CD4-positive, alpha-beta T cell (primary cell): ENCODE measurements at regions of chr17 and their contacts with region 1.

Region 1: GRCh38 chr17:69428254-69428980 is 13.9 kb downstream of the MAP2K6 start:
- DNase-seq: peak in 2 of 14 experiments; percentile 38 to 49
- ATAC-seq: no peak
- H3K4me3 ChIP-seq: no peak overlapping the region
- H3K4me3 Mint-ChIP-seq: no peak overlapping the region
- H3K27ac ChIP-seq: no peak overlapping the region
- H3K27ac Mint-ChIP-seq: no peak overlapping the region
- H3K4me1 ChIP-seq: peaks cover 10% of the 10 kb centered on the region
- H3K4me1 Mint-ChIP-seq: peaks cover 84% of the 10 kb centered on the region
- H3K27me3 ChIP-seq: no peaks in the 10 kb centered on the region
- H3K27me3 Mint-ChIP-seq: no peaks in the 10 kb centered on the region
- CTCF ChIP-seq: no peak

Region 2: GRCh38 chr17:69269131-69269998 is 159.1 kb before region 1 on chr17:
- CTCF ChIA-PET with region 1: no interaction called
- POLR2A ChIA-PET with region 1: no interaction called
- intact Hi-C with region 1: no loop called
- DNase-seq: peak in 1 of 14 experiments; percentile 4
- ATAC-seq: no peak
- H3K4me3 ChIP-seq: no peak overlapping the region
- H3K4me3 Mint-ChIP-seq: no peak overlapping the region
- H3K27ac ChIP-seq: no peak overlapping the region
- H3K27ac Mint-ChIP-seq: no peak overlapping the region
- H3K4me1 ChIP-seq: no peaks in the 10 kb centered on the region
- H3K4me1 Mint-ChIP-seq: no peaks in the 10 kb centered on the region
- H3K27me3 ChIP-seq: no peaks in the 10 kb centered on the region
- H3K27me3 Mint-ChIP-seq: no peaks in the 10 kb centered on the region
- CTCF ChIP-seq: no peak

Region 3: DNA sequence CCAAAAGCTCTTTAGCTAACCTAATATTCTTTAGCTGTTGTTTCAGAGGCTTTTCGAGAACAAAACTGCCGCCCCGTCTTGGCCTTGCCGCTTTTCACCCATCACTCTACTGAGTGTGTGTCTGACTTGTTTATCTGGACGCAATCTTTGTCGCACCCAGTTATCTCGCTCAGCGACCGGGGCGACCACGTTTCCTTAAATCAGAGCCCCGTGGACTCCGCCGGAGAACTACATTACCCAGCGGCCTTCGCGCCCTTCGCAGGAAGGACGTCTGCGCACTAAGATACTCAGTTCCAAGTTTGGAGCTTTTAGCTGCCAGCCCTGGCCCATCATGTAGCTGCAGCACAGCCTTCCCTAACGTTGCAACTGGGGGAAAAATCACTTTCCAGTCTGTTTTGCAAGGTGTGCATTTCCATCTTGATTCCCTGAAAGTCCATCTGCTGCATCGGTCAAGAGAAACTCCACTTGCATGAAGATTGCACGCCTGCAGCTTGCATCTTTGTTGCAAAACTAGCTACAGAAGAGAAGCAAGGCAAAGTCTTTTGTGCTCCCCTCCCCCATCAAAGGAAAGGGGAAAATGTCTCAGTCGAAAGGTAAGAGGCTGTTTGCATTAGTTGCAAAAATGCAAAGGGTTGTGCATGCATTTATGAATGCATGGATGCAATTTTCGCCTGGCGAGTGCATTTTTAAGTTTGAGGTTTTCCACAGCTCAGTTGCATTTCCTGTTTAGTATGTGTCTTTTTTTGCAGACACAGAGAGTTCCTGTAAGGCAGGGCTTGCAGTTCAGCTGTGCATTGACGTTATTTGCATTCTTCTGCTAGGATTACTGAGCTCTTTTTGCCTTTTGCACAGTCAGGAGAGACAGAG is 13.8 kb before region 1 on chr17 and contains the start of gene MAP2K6:
- CTCF ChIA-PET with region 1: no interaction called
- POLR2A ChIA-PET with region 1: interaction called, 14 read pairs
- intact Hi-C with region 1: no loop called
- DNase-seq: peak; percentile 67 to 89 (median 79)
- ATAC-seq: peak; percentile 94
- H3K4me3 ChIP-seq: peak within 1 kb of the TSS; percentile 79
- H3K4me3 Mint-ChIP-seq: no peak within 1 kb of the TSS
- H3K27ac ChIP-seq: peak within 1 kb of the TSS in 1 of 2 donors; percentile 51
- H3K27ac Mint-ChIP-seq: no peak within 1 kb of the TSS
- H3K4me1 ChIP-seq: peaks cover 16% of the 10 kb centered on the region
- H3K4me1 Mint-ChIP-seq: no peaks in the 10 kb centered on the region
- H3K27me3 ChIP-seq: no peaks in the 10 kb centered on the region
- H3K27me3 Mint-ChIP-seq: no peaks in the 10 kb centered on the region
- CTCF ChIP-seq: no peak
- total RNA-seq, gene MAP2K6: 14.0 to 14.6 TPM

Region 4: GRCh38 chr17:69473841-69474831 is 45.7 kb after region 1 on chr17:
- CTCF ChIA-PET with region 1: no interaction called
- POLR2A ChIA-PET with region 1: no interaction called
- intact Hi-C with region 1: loop called in 1 of 2 experiments (anchors 10 kb)
- DNase-seq: no peak
- ATAC-seq: no peak
- H3K4me3 ChIP-seq: no peak overlapping the region
- H3K4me3 Mint-ChIP-seq: no peak overlapping the region
- H3K27ac ChIP-seq: no peak overlapping the region
- H3K27ac Mint-ChIP-seq: no peak overlapping the region
- H3K4me1 ChIP-seq: no peaks in the 10 kb centered on the region
- H3K4me1 Mint-ChIP-seq: peaks cover 34% of the 10 kb centered on the region
- H3K27me3 ChIP-seq: no peaks in the 10 kb centered on the region
- H3K27me3 Mint-ChIP-seq: no peaks in the 10 kb centered on the region
- CTCF ChIP-seq: no peak